ENCODE measurements at regions of chr11 and their contacts with region 1.

Region 1: DNA sequence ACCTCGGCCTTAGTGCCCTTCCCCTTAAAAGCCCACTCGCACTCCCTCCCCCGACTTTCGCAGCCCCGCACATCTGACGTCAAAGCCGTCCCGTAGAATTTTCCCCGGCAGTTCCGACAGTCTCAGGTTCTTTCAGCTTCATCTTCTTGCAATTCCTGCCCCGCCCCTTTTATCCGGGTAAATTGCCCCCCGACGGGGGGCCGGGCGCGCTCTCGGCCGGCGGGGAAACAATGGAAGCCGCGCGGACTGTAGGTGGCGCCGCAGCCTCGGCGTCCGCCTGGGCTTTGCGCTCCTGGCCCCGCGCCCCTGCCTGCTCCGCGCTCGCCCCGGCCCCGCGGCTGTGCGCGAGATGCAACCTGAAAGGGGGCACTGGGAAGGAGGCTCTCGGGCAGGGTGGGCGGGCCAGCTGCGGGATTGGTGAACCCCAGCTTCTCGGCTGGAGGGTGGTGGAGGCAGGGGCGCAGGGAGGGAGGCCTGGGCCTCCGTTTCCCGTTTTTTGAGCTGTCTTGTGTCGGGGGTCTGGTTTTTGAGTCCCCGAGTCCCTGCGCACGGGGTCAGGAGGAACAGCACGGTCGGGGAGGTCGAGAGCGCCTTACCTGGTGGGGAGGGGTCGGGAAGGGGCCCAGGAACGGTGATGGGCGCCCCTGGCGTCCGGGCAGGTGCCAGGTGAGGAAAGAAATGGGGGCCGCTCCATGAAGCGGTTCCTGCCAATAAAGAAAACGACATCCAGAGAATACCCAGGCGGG is 859 bp upstream of the FGF19 start:
- DNase-seq: no peak
- H3K4me3 ChIP-seq: no peak overlapping the region
- CTCF ChIP-seq: peak; percentile 57

Region 2: DNA sequence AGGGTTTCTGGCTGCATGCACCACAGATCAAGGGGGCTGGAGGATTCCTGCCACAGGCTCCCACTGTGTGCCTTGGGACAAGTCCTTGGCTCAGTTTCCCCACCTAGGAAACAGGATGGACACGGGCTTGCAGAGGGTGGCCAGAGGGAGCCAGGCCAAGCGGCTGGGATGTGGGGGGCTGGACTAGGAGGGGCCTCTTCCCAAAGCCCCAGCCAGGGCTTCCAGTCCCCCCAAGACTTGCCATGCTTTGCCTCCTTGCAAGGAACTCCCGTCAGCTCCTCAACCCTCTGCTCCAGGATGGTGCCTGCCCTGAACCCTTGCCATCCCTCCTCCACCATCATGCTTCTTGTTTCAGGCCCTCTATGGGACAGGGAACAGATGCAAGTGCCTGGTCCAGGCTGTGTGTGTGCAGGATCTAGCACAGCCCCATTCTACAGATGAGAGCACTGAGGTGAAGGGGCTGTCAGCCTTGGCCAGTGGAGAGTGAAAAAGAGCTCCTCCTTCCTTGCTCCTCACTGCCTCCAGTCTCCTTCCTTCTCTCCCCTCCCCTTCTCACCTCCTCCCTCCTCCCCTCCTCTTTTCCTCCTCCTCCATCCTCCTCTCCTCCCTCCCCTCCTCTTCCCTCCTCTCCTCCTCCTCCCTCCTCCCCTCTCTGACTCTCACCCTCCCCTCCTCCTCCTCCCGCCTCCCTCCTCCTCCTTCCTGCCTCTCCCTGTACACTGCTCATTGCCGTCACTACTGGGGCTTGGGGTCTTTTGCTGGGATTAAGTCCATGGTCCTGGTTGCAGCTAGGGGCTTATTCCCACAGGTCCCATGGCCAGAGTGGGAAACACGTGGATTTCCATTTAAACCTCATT is 12.4 kb after region 1 on chr11:
- CTCF ChIA-PET with region 1: interaction called, 12 read pairs
- POLR2A ChIA-PET with region 1: interaction called, 3 read pairs
- DNase-seq: no peak
- H3K4me3 ChIP-seq: no peak overlapping the region
- CTCF ChIP-seq: no peak